ENCODE measurements at regions of chr1 and their contacts with region 1.

Region 1: DNA sequence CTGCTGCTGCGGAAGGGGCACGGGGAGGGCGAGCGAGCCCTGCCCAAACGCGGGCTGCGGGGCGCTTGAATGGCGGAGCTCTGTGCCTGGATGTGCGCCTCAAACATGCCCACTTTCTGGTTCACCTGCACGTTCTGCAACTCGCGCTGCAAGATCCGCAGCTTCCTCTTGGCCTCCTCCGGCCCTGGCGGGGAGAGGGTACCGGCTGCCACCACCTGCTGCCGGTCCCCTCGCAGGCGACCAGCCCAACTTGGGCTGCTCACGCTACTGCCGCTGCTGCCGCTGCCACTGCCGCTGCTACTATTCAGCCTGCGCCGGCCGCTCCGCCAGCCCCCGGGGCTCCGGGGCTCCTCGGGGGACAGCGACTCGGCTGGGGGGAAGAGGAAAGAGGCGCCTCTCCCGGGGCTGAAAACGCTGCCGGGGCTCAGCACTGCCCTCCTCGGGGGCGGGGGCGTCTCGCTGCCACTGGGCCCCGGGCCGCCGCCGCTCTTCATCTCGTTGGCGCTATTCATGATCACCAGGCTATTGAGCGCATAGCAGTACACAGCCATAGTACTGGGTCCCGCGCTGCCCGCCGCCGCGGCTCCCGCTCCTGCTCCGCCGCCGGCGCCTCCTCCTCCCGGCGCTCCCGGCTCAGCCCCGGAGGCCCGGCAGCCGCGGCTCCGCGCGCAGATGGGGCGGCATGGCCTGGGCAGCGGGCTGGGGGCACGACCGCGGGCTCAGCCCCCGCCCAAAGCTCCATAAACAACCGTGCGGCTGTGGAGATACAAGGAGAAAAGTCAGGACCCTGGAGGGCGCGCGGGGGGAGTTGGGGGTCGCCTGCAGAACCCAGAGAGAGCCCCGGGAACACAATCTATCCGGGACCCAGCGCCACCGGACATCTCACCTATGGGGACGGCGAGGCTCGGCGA is 1.9 kb downstream of the ITPKB start:
- DNase-seq: no peak
- H3K4me3 ChIP-seq: peak overlapping the region; percentile 90 to 97 (median 94)
- H3K27ac ChIP-seq: peak overlapping the region in 3 of 4 donors; percentile 97 to 98 (median 98)
- H3K4me1 ChIP-seq: peaks cover 37 to 64% (median 62%) of the 10 kb centered on the region in 4 donors
- H3K27me3 ChIP-seq: no peaks in the 10 kb centered on the region
- CTCF ChIP-seq: peak in 2 of 3 experiments; percentile 16 to 28
- EP300 ChIP-seq: no peak
- POLR2A ChIP-seq: no peak

Region 2: DNA sequence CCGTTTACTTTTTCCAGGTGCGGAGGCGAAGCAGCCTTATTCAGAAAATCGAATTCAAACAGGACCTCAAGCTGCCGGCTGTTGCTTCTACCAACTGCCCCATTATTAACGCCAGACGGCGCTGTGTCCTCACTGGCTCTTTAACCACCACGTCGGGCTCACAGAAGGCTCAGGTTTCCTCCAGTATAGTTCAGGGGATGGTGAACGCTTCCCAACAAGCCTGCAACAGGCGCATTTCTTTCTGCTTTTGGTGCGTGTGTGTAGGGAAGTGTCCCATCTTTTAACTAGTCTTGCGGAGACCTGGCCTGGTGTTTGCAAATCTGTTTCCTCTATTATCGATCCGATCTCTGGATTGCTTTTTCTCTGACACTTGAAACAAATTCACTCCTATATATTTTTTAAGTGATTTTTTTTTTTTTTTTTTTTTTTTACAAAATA is 189.4 kb before region 1 on chr1:
- intact Hi-C with region 1: loop called (anchors 10 kb)
- DNase-seq: no peak
- H3K4me3 ChIP-seq: peak overlapping the region; percentile 63 to 76 (median 70)
- H3K27ac ChIP-seq: peak overlapping the region; percentile 68 to 89 (median 84)
- H3K4me1 ChIP-seq: peaks cover 28 to 48% (median 43%) of the 10 kb centered on the region in 4 donors
- H3K27me3 ChIP-seq: peaks cover 0 to 13% (median 0%) of the 10 kb centered on the region in 4 donors
- CTCF ChIP-seq: peak in 2 of 3 experiments; percentile 91 to 97
- EP300 ChIP-seq: no peak
- POLR2A ChIP-seq: no peak

Region 3: DNA sequence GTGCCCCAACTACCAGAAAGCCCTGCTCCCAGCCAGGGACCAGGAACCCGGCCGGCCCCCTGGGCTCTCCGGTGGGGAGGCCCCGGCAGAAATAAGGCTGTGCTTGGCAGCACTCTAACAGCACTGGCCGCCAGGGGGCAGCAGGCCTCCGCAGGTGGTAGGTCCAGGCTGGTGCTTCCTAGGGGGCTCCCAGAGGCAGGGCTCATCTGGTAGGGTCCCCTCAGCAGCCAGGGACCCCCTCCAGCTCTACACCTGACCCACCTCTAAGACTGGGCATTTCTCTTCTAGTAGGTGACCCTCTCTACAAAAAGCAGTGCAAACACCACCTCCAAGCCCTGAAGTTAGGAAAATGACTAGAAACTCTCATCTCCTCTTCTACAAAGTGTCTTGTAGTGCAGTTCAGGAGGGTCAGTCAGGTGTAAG is 103.0 kb before region 1 on chr1:
- intact Hi-C with region 1: loop called (anchors 5 kb)
- DNase-seq: no peak
- H3K4me3 ChIP-seq: no peak overlapping the region
- H3K27ac ChIP-seq: peak overlapping the region in 2 of 4 donors; percentile 74 to 83
- H3K4me1 ChIP-seq: peaks cover 40 to 84% (median 76%) of the 10 kb centered on the region in 4 donors
- H3K27me3 ChIP-seq: no peaks in the 10 kb centered on the region
- CTCF ChIP-seq: peak in 2 of 3 experiments; percentile 96
- EP300 ChIP-seq: no peak
- POLR2A ChIP-seq: no peak

Region 4: DNA sequence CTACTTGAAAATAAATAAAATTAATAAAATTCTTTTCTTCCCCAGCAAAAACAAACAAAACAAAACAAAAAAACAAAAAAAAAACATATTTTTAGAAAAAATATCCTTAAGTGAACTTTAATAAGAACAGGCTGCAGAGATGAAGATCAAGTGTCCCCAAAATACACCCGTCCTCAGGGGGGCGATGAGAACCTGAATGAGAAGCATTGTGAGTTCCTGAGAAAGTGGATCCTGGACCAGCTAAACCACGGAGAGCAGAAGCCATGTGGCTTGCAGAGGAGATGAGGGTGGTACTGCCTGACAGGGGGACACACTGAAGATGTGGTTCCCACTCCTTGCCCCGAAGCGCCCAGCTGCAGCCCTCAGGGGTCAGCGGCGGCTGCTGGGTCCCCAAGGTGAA is 87.4 kb before region 1 on chr1:
- intact Hi-C with region 1: loop called (anchors 5 kb)
- DNase-seq: no peak
- H3K4me3 ChIP-seq: no peak overlapping the region
- H3K27ac ChIP-seq: no peak overlapping the region
- H3K4me1 ChIP-seq: peaks cover 28 to 34% (median 31%) of the 10 kb centered on the region in 4 donors
- H3K27me3 ChIP-seq: no peaks in the 10 kb centered on the region
- CTCF ChIP-seq: peak in 2 of 3 experiments; percentile 38 to 48
- EP300 ChIP-seq: no peak
- POLR2A ChIP-seq: no peak

Region 5: DNA sequence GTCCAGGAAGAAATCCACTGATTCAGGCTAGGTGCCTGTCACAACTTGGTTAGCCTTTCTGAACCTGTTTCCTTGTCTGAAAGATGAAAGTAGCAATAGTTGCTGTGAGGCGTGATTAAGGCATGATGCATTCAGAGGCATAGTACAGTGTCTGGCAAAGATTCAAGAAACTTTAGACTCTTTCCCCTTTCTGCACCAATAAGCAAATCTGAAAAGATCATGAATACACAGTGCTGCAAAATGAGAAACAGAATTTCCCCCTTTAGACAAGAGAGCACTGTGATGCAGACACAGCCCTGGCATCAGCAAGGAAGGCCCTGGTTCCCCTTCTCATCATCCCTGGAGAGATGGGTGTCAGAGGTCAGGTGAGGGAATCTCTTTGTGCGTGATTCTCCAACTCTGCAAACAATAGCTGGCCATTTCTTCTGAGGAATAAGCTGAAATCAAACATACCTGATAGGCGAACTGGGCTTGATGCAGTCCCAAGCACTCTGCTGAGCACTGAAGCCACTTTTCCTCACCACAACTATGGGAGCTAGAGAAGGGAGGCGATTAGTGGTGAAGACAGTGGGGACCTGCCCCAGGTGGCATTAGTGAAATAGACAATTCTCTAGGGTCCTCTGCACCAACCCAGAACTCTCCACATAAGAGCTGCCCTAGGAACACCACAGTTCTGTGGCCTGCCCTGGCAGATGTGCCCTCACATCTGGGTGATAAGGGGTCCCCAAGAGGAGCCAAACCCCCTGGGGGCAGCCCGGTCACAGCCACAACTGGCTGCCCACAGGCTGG is 39.8 kb before region 1 on chr1:
- intact Hi-C with region 1: loop called (anchors 5 kb)
- DNase-seq: no peak
- H3K4me3 ChIP-seq: no peak overlapping the region
- H3K27ac ChIP-seq: peak overlapping the region in 1 of 4 donors; percentile 100
- H3K4me1 ChIP-seq: peaks cover 0 to 77% (median 38%) of the 10 kb centered on the region in 4 donors
- H3K27me3 ChIP-seq: no peaks in the 10 kb centered on the region
- CTCF ChIP-seq: no peak
- EP300 ChIP-seq: no peak
- POLR2A ChIP-seq: no peak

Region 6: GRCh38 chr1:226827968-226828513 is 90.9 kb after region 1 on chr1:
- intact Hi-C with region 1: loop called (anchors 2 kb)
- DNase-seq: peak; percentile 97
- H3K4me3 ChIP-seq: peak overlapping the region; percentile 25 to 35 (median 32)
- H3K27ac ChIP-seq: peak overlapping the region; percentile 84 to 90 (median 87)
- H3K4me1 ChIP-seq: peaks cover 17 to 22% (median 20%) of the 10 kb centered on the region in 4 donors
- H3K27me3 ChIP-seq: no peaks in the 10 kb centered on the region
- CTCF ChIP-seq: peak; percentile 97 to 98 (median 97)
- EP300 ChIP-seq: no peak
- POLR2A ChIP-seq: no peak

Measured in esophagus muscularis mucosa (tissue), 4 donors.